Dorsolateral prefrontal cortex (tissue), 120 donors: ENCODE measurements at regions of chr7 and their contacts with region 1.

Region 1: DNA sequence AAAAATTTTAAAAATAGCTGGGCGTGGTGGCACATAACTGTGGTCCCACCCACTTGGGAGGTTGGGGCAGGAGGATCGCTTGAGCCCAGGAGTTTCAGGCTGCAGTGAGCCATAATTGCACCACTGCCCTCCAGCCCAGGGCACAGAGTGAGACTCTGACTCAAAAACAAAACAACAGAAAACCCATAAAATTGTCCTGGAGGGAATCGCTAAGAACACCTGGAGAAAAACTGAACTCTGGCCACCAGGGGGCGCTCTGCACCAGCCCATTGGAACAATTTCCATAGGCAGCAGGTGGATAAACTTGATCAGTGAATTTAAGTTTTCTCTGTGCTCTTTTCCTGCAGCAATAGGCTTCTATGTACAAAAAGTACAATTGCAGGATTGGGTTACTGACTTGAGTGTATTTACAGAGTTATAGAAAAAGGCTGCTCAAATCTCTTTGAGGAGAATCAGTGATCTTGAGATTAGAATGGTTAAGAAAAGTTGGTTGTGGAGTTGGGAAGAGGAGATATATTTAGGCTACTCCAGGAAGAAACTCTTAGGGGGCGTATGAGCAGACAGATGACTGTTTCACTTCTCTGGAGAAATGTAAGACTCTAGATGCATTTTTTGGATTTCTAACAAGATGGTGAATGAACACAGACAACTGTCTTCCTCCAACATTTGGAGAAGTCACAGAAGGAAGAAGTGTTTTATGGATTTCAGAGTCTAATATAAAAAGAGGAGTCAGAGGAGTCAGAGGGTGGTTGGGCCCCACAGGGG is 274.9 kb upstream of the GALNT17 start:
- DNase-seq: peak; percentile 67 to 89 (median 80)
- H3K4me3 ChIP-seq: no peak overlapping the region
- H3K27ac ChIP-seq: no peak overlapping the region
- H3K27me3 ChIP-seq: peaks cover 0 to 10% (median 0%) of the 10 kb centered on the region in 45 donors
- CTCF ChIP-seq: peak; percentile 90 to 100 (median 96)

Region 2: GRCh38 chr7:70893971-70894715 is 37.1 kb after region 1 on chr7:
- intact Hi-C with region 1: no loop called
- DNase-seq: no peak
- H3K4me3 ChIP-seq: no peak overlapping the region
- H3K27ac ChIP-seq: no peak overlapping the region
- H3K27me3 ChIP-seq: peaks cover 0 to 6% (median 0%) of the 10 kb centered on the region in 45 donors
- CTCF ChIP-seq: no peak

Region 3: GRCh38 chr7:71548746-71549145 is 691.7 kb after region 1 on chr7:
- intact Hi-C with region 1: loop called in 1 of 2 experiments (anchors 10 kb)
- DNase-seq: no peak
- H3K4me3 ChIP-seq: no peak overlapping the region
- H3K27ac ChIP-seq: no peak overlapping the region
- H3K27me3 ChIP-seq: no peaks in the 10 kb centered on the region
- CTCF ChIP-seq: no peak

Region 4: DNA sequence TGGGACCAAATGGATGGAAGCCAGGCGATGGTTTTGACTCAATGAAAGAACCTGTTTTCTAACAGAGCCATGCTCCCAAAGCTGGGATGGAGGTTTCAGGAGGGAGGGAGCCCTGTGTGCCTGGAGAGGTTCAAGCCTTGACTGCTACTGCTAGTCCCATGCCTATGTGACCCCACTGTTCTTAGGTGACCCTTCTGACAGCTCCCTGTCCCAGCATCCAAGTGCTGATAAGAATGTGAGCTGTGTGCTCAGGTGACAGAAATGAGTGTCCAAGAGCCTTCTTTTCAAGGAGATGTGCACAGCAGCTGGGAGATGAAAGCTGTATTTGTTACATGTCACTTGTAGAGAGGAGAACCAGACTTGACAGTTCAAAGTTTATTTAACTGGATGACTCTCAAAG is 870.3 kb after region 1 on chr7:
- intact Hi-C with region 1: loop called (anchors 2 kb)
- DNase-seq: no peak
- H3K4me3 ChIP-seq: no peak overlapping the region
- H3K27ac ChIP-seq: no peak overlapping the region
- H3K27me3 ChIP-seq: no peaks in the 10 kb centered on the region
- CTCF ChIP-seq: no peak